ENCODE measurements at regions of chr22 and their contacts with region 1.

Region 1: DNA sequence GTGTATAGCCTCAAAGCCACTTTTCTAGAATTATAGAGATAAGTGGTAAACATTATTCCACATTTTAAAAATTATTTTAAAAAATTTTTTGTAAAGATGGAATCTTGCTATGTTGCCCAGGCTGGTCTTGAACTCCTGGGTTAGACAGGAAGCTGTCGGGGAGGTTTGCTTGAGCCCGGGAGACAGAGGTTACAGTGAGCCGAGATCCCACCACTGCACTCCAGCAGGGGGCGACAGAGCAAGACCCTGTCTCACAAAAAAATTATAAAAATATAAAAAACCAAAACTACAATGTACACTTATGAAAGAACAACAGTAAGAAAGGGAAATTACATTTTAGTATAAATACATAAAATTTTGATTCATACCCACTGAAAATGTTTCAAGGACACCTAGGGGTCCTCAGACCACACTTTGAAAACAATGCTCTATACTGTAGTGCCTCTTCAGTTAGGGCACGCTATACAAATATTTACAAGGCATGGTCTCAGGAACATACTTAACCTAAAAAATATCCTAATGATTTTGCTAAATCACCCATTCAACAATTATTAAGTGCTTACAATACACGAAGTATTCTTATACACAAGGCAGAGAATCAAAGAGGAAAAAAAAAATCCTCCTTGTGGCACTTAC is 111.2 kb downstream of the MRTFA start:
- DNase-seq: no peak
- H3K4me3 ChIP-seq: no peak overlapping the region
- H3K27me3 ChIP-seq: no peaks in the 10 kb centered on the region
- CTCF ChIP-seq: peak; percentile 70

Region 2: DNA sequence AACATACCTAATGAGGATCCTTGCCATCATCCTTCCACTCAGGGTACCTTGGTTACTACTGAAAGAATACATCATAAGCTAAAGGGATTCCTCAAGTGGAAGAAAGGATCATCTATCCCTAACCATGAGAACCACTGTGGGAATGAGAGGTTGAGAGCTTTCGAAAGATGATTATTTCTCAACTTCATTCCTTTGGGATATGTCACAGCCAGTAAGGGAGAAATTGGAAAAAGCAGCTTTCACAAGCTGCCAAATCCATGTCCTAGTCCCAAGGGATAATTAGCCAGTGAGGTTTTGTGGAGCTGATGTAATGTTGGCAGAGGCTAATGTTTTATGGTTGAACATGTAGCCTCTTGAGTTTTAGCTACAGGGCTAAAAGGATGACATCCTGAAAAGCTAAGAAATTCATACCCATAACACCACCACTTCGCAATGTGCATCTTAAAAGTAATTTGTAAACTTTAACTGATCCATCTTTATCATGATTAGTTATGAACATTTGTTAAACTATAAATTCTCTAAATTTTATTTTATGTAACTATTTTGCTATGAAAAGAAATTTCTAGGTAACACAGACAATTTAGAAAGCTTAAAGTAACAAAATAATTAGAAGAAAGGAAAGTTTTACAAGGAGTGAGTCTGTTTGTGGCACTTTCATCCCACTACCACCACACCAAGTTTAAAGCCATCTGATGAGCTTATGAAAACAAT is 12.8 kb before region 1 on chr22:
- CTCF ChIA-PET with region 1: interaction called, 21 read pairs
- POLR2A ChIA-PET with region 1: no interaction called
- DNase-seq: peak; percentile 99
- H3K4me3 ChIP-seq: no peak overlapping the region
- H3K27me3 ChIP-seq: no peaks in the 10 kb centered on the region
- CTCF ChIP-seq: no peak

Region 3: GRCh38 chr22:40560551-40560950 is 35.2 kb after region 1 on chr22:
- CTCF ChIA-PET with region 1: no interaction called
- POLR2A ChIA-PET with region 1: no interaction called
- DNase-seq: peak; percentile 11
- H3K4me3 ChIP-seq: no peak overlapping the region
- H3K27me3 ChIP-seq: no peaks in the 10 kb centered on the region
- CTCF ChIP-seq: no peak

Region 4: GRCh38 chr22:40641269-40641668 is 115.9 kb after region 1 on chr22:
- CTCF ChIA-PET with region 1: interaction called, 65 read pairs
- POLR2A ChIA-PET with region 1: interaction called, 5 read pairs
- DNase-seq: no peak
- H3K4me3 ChIP-seq: no peak overlapping the region
- H3K27me3 ChIP-seq: no peaks in the 10 kb centered on the region
- CTCF ChIP-seq: no peak

Measured in BJ (cell line).